Sigmoid colon (tissue), 7 donors: ENCODE measurements at regions of chr5 and their contacts with region 1.

Region 1: DNA sequence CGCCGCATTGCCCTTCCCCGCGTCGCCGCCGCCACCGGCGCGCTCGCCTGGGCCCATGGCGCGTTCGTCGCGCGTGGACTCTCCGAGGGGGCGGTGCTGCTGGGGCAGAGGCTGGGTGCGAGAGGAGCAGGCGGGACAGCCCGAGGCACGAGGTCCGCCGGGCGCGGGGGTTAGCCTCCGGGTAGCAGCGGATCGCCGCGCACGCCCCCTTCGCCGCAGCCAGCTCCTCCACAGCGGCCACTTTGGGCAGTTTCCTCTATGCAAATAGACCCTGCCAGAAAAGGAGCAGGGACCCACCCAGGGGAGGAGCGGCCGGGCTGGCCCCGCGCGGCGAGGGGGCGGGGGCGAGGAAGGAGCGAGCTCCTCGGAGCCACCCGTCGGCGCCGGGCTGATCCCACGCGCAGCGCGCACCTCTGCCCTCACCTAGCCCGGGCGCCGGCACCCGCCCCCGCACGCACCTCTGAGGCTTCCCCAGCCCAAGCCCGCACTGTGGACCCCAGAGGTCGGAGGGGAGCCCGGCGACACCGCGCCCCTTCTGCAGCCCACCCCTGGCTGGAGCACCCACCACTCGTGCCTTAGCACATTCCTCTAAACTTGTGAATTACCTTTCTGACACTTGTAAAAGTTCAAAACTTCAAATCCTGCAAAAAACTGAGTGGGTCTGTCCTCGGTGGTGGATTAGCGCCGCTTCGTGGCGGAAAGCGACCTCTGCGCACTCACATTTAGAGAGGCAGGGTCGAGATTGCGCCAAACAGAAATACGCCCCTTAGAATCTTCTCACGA is at the start of gene COL23A1:
- DNase-seq: peak; percentile 77
- H3K4me3 ChIP-seq: peak within 1 kb of the TSS; percentile 26 to 60 (median 48)
- H3K27ac ChIP-seq: peak within 1 kb of the TSS in 3 of 4 donors; percentile 0 to 56 (median 55)
- H3K4me1 ChIP-seq: peaks cover 0 to 27% (median 21%) of the 10 kb centered on the region in 4 donors
- H3K27me3 ChIP-seq: peaks cover 3 to 23% (median 20%) of the 10 kb centered on the region in 3 donors
- CTCF ChIP-seq: peak; percentile 27 to 64 (median 57)
- EP300 ChIP-seq: no peak
- POLR2A ChIP-seq: no peak
- total RNA-seq, gene COL23A1: 0.28 to 1.2 (median 0.52) TPM

Region 2: DNA sequence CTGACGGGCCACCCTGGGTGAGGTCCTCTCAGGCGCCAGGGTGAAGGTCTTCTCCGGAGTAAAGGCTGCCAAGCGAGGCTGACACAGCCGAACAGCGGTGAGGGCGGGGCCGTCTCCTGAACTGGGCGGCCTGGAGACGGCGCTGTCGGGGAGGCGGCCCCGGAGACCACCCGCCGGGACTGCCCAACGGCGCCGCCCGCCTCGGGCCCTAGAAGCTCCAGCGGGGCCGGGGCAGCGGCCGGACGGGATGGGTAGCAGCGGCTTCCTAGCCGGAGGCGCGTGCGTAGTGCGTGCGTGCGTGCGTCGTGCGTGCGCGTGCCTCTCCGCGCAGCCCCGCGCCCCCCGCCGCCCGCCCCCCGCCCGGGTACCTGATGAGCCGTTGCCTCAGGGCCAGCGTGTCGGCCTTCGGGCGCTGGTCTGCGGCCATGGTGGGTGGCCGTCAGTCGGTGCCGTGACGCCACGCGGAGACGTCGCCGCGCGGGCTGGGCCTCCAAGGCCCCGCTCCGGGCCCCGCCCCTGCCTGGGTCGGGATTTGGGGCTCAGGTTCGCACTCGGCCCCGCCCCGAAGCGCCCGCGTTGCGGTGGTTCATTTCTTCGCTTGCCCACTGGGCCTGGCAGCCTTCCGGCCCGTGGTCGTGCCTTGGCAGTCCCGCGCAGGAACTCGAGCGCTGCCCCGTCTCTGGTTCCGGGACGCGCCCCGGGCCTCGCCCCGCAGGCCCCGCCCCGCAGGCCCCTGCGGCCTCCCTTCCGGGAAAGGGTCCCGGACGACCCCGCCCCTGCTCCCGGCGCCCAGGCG is 358.0 kb before region 1 on chr5 and contains the start of gene PHYKPL:
- intact Hi-C with region 1: loop called (anchors 2 kb)
- DNase-seq: peak; percentile 86
- H3K4me3 ChIP-seq: peak within 1 kb of the TSS; percentile 65 to 92 (median 80)
- H3K27ac ChIP-seq: peak within 1 kb of the TSS; percentile 87 to 97 (median 96)
- H3K4me1 ChIP-seq: peaks cover 0 to 29% (median 27%) of the 10 kb centered on the region in 4 donors
- H3K27me3 ChIP-seq: no peaks in the 10 kb centered on the region
- CTCF ChIP-seq: no peak
- EP300 ChIP-seq: no peak
- POLR2A ChIP-seq: no peak
- total RNA-seq, gene PHYKPL: 26.0 to 66.5 (median 41.6) TPM

Region 3: DNA sequence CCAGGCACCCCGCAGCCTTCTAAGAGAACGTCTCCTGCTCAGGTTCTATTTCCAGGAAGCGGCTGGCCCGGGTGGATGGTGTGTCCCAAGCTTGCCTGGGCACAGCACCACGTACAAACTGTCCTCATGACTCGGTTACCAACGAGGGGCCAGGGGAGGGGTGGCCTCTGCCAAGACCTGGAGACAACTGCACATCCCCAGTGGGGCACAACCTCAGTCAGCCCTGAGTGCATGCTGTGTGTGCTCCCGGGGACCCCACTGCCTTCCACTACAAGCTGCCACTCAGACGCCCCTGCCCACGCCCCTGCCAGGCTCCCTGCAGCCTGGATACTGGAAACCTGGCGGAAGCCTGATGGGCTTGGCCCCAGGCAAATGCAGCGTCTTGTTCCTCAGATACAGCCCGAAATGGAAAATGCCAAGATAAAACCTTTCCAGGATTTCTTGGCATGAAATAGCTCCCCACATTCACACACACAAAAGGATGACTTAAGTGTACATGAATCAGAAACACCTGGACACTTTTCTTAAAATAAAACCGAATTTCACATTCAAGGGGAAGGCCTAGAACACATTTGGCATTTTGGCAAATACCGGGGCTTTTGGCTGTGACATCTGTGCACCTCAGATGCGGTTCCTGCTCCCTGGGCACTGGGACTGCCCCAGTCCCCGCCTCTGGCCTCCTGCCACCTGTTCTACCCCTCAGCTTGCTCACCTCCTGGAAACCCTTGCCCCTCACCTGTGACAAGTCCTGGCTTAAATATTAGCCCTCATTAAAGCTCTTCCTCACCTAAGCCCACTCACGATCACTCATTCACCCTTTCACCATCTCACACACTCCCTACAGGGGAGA is 62.6 kb before region 1 on chr5:
- intact Hi-C with region 1: no loop called
- DNase-seq: no peak
- H3K4me3 ChIP-seq: no peak overlapping the region
- H3K27ac ChIP-seq: no peak overlapping the region
- H3K4me1 ChIP-seq: no peaks in the 10 kb centered on the region
- H3K27me3 ChIP-seq: no peaks in the 10 kb centered on the region
- CTCF ChIP-seq: no peak
- EP300 ChIP-seq: no peak
- POLR2A ChIP-seq: no peak

Region 4: DNA sequence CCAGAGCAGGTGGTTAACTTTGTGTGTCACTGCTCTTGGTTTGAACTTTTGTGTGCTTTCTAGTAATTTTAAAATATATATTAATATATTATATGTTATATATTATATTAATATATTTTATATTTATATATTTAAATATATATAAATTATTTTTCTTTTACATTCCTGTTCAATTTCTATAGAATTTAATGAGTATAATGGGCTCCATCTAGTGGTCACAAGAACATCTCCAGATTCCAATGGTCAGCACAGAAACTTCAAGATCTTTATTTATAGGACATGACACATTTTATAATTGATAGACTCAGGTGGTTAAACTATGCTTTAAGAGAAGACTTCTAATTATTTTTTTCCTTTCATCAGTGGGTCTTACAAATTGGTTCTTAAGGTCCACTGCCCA is 39.3 kb before region 1 on chr5:
- intact Hi-C with region 1: loop called (anchors 5 kb)
- DNase-seq: no peak
- H3K4me3 ChIP-seq: no peak overlapping the region
- H3K27ac ChIP-seq: no peak overlapping the region
- H3K4me1 ChIP-seq: peaks cover 0 to 8% (median 0%) of the 10 kb centered on the region in 4 donors
- H3K27me3 ChIP-seq: peaks cover 0 to 4% (median 0%) of the 10 kb centered on the region in 3 donors
- CTCF ChIP-seq: peak in 2 of 4 experiments; percentile 9 to 37
- EP300 ChIP-seq: no peak
- POLR2A ChIP-seq: no peak

Region 5: DNA sequence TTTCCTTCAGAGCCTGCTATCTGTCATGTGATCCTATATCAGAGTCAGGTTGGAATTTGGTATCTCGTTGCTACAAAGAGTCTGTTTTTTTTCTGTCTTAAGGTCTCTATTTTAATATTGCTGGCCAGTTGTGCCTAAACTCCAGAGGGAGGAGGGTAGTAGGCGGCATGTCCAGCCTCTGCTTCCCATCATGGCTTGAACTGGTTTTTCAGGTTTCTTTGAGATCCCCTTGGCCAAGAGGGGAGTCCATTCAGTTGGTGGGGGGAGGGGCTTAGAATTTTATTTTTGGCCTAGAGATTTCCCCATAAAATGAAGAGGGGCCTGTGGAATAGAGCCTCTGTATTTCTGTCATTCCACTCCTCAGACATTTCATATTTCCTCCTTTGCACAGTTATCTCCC is 454.4 kb after region 1 on chr5:
- intact Hi-C with region 1: no loop called
- DNase-seq: no peak
- H3K4me3 ChIP-seq: no peak overlapping the region
- H3K27ac ChIP-seq: no peak overlapping the region
- H3K4me1 ChIP-seq: no peaks in the 10 kb centered on the region
- H3K27me3 ChIP-seq: no peaks in the 10 kb centered on the region
- CTCF ChIP-seq: no peak
- EP300 ChIP-seq: no peak
- POLR2A ChIP-seq: no peak